GM10248 (cell line): ENCODE measurements at regions of chr16 and their contacts with region 1.

Region 1: GRCh38 chr16:49592546-49593423 is 219.2 kb downstream of the C16orf78 start:
- DNase-seq: peak; percentile 72
- CTCF ChIP-seq: peak; percentile 55

Region 2: DNA sequence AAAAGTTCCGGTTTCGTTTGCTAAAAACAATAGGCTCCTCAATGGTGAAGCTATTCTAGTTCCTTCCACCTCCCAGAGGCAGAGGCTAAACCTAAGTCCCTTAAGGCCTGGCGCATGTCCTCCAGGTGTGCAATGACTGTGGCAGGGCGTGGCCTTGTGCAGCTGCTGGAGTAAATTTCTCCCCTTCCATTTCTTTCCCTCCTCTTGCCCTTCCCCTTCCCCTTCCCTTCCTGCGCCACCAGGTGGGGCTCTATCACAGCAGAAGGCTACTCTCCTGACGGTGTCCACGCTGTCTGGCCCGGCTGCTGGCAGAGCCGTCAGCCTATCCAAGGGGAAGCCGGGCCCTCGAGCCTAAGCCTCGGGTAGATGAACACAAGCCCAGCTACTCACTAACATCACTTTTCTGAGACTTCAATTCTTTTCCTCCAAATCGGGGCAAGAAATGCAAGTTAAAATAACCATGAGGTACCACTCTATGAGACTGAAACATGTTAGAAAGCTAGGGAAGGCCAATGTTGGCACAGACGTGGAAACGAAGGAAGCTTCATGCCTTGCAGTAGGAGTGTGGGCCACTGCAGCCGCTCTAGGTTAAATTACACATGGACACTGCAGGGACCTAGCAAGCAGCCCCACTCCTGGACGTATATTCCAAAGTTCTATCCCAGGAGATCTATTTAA is 184.8 kb before region 1 on chr16:
- CTCF ChIA-PET with region 1: interaction called, 21 read pairs
- POLR2A ChIA-PET with region 1: no interaction called
- DNase-seq: peak; percentile 79
- CTCF ChIP-seq: peak; percentile 92

Region 3: GRCh38 chr16:49567950-49568349 is 24.8 kb before region 1 on chr16:
- CTCF ChIA-PET with region 1: interaction called, 16 read pairs
- POLR2A ChIA-PET with region 1: no interaction called
- DNase-seq: no peak
- CTCF ChIP-seq: no peak

Region 4: DNA sequence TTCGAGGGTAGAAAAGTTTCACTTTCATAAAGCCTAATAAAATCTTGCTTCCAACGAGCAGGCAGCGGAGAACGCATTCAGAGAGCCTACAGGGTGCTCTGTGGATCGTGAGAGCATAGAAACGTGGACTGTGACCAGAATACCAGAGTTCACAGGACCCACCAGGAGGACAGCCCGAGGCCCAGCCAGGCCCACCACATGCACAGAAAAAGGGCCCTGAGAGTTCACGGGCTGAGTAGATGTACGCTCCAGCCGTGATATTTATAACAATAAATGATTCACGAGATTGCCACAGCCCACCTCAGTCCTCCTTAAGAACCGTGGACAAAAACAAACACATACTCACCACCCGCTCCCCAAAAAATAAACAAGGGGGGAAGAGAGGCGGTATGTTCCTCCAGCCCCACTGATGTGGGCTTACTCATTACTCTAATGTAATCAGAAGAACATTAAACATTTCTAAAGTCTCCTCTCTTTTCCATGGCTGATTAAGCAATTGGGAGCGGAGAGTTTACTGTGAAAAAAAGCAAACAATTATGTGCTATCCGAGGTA is 12.0 kb before region 1 on chr16:
- CTCF ChIA-PET with region 1: interaction called, 28 read pairs
- POLR2A ChIA-PET with region 1: no interaction called
- DNase-seq: no peak
- CTCF ChIP-seq: no peak

Region 5: GRCh38 chr16:49652456-49653172 is 59.8 kb after region 1 on chr16:
- CTCF ChIA-PET with region 1: no interaction called
- POLR2A ChIA-PET with region 1: no interaction called
- DNase-seq: no peak
- CTCF ChIP-seq: no peak